AG04450 (cell line): ENCODE measurements at regions of chr13 and their contacts with region 1.

Region 1: DNA sequence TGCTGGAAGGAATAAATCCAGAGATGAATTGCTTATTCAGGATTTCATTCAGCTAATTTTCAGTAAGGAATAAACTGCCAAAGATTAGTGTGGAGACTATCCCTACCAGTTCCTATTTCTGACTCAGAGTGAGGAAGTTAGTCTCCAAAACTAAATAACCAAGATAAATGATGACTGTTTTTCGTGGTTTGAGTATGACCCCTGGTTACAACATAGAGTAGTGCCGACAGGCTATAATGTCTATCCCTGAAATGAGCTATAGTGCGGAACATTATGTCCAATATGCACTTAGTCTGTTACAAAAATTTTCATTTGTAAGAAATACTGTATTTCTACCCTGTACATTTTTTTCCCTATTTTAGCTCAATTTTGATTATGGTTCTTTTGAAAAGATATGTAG is 51.4 kb downstream of the NBEA start:
- DNase-seq: no peak
- H3K4me3 ChIP-seq: no peak overlapping the region
- H3K27ac ChIP-seq: no peak overlapping the region
- H3K27me3 ChIP-seq: no peaks in the 10 kb centered on the region
- CTCF ChIP-seq: no peak

Region 2: DNA sequence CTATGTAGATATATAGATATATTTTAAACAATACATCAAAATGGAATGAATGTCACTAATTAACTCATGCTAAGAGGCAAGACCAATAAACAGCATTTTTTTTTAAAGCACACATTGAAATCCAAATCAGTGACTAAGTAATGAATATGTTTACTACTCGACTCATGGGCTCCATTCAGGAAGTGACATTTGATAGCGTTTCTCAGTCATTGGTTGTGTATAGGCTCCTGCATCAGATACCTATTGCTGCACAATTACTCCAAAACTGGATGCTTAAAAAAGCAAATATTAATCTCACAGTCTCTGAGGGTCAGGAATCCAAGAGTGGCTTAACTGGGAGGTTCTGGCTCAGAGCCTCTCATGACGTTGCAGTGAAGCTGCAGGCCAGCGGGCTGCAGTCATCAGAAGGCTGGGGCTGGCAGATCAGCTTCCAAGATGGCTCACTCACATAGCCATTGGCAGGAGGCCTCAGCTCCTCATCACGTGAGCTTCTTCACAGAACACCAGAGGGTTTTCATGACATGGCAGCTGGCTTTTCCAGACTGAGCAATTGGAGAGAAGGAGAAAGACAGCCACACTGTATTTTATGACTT is 576.5 kb before region 1 on chr13:
- CTCF ChIA-PET with region 1: no interaction called
- POLR2A ChIA-PET with region 1: no interaction called
- DNase-seq: peak; percentile 73
- H3K4me3 ChIP-seq: no peak overlapping the region
- H3K27ac ChIP-seq: peak overlapping the region; percentile 69
- H3K27me3 ChIP-seq: no peaks in the 10 kb centered on the region
- CTCF ChIP-seq: no peak

Region 3: GRCh38 chr13:35014606-35015213 is 21.2 kb after region 1 on chr13:
- CTCF ChIA-PET with region 1: interaction called, 11 read pairs
- POLR2A ChIA-PET with region 1: no interaction called
- DNase-seq: no peak
- H3K4me3 ChIP-seq: no peak overlapping the region
- H3K27ac ChIP-seq: no peak overlapping the region
- H3K27me3 ChIP-seq: no peaks in the 10 kb centered on the region
- CTCF ChIP-seq: no peak

Region 4: GRCh38 chr13:35191883-35192282 is 198.4 kb after region 1 on chr13:
- CTCF ChIA-PET with region 1: no interaction called
- POLR2A ChIA-PET with region 1: no interaction called
- DNase-seq: no peak
- H3K4me3 ChIP-seq: no peak overlapping the region
- H3K27ac ChIP-seq: no peak overlapping the region
- H3K27me3 ChIP-seq: no peaks in the 10 kb centered on the region
- CTCF ChIP-seq: no peak